Uterus (tissue), 4 donors: ENCODE measurements at regions of chr17 and their contacts with region 1.

Region 1: DNA sequence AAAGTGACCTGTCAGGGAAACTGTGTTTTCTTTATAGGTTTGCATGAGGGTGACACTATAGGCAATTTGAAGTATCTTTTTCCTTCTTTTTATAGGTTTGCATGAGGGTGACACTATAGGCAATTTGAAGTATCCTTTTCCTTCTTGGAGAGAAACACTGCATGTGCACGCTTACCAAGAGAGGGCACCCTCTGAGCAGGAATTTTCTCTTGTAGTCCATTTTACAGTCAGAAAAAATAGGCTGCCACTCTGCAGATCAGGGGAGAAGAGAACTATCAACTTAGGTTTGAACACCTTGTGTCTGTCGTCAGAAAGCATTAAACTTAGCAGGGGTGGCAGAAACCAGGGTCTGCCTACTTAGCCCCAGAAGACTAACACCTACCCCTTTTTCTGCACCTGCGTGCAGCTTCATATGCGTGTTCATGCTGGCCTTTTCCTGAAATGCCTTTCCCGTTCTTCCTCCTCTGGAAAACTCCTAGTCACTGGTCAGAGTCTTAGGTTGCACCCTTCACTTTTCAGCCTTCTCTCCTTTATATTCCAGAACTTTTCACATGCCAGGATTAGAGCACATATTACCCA is 16.4 kb upstream of the SMIM36 start:
- DNase-seq: peak; percentile 37 to 47
- H3K4me3 ChIP-seq: no peak overlapping the region
- H3K27ac ChIP-seq: no peak overlapping the region
- H3K4me1 ChIP-seq: no peaks in the 10 kb centered on the region
- H3K27me3 ChIP-seq: no peaks in the 10 kb centered on the region
- CTCF ChIP-seq: peak; percentile 36 to 76 (median 62)
- POLR2A ChIP-seq: no peak

Region 2: DNA sequence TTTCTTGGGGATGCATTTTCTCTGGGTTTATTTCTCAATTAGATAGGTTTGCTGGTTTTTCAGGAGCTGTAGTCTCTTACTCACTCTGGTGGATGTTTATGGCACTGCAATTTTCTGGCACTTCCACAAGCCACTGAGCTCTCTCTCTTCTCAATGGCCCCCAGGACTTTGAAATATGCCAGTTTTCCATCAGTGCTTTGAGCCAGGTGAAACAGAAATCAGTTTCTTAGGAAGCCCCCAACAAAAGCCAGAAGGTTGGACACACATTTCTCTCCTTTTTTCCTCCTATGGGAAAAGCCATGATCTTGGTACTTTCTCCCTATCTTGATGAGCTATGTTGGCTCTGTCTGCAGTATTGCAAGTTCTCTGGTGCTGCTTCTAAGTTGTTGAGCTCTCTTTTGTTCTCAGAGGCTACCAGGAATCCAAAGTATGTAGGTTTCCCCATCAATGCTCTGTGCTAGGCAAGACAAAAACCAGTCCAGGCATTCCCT is 74.3 kb after region 1 on chr17:
- intact Hi-C with region 1: no loop called
- DNase-seq: no peak
- H3K4me3 ChIP-seq: no peak overlapping the region
- H3K27ac ChIP-seq: no peak overlapping the region
- H3K4me1 ChIP-seq: no peaks in the 10 kb centered on the region
- H3K27me3 ChIP-seq: no peaks in the 10 kb centered on the region
- CTCF ChIP-seq: peak; percentile 44 to 55 (median 50)
- POLR2A ChIP-seq: no peak

Region 3: GRCh38 chr17:55641676-55642081 is 114.0 kb after region 1 on chr17:
- intact Hi-C with region 1: loop called (anchors 5 kb)
- DNase-seq: peak; percentile 75 to 85
- H3K4me3 ChIP-seq: no peak overlapping the region
- H3K27ac ChIP-seq: no peak overlapping the region
- H3K4me1 ChIP-seq: no peaks in the 10 kb centered on the region
- H3K27me3 ChIP-seq: no peaks in the 10 kb centered on the region
- CTCF ChIP-seq: peak; percentile 44 to 75 (median 60)
- POLR2A ChIP-seq: no peak

Region 4: DNA sequence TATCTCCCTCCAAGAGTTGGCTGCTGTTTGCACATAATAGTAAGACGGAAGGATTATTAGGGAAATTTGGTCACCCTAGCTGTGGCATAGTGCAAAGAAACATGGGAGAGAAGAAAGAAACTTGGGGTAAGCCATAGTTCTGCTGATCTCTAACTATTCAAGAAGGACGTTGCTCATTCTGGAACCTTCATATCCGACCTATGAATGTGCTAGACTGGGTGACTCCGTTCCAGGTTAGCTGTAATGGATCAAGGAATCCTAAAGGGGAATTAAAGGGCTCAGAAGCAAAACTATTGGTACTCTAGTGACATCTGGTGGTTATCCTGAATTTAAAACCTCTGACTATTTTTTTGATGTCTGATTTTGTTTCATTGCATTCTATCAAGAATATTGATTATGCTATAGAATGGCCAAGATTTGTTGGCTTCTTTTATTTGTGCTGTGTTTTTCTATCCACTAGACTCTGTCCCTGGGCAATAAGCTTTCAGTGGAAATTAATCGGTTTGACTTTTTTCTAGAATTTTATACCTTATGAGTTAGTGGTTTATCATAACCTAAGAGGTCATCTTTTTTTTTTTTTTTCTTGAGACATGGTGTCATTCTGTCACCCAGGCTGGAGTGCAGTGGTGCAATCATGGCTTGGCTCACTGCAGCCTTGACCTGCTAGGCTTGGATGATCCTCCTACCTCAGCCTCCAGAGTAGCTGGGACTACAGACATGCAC is 242.7 kb after region 1 on chr17:
- intact Hi-C with region 1: loop called (anchors 10 kb)
- DNase-seq: no peak
- H3K4me3 ChIP-seq: no peak overlapping the region
- H3K27ac ChIP-seq: no peak overlapping the region
- H3K4me1 ChIP-seq: no peaks in the 10 kb centered on the region
- H3K27me3 ChIP-seq: no peaks in the 10 kb centered on the region
- CTCF ChIP-seq: peak; percentile 48 to 71 (median 62)
- POLR2A ChIP-seq: no peak